ENCODE measurements at regions of chr1 and their contacts with region 1.

Region 1: GRCh38 chr1:247119600-247120407 is 15.6 kb upstream of the ZNF669 start:
- DNase-seq: no peak
- H3K4me3 ChIP-seq: no peak overlapping the region
- H3K27ac ChIP-seq: no peak overlapping the region
- H3K4me1 ChIP-seq: no peaks in the 10 kb centered on the region
- H3K27me3 ChIP-seq: no peaks in the 10 kb centered on the region
- CTCF ChIP-seq: no peak
- EP300 ChIP-seq: no peak
- POLR2A ChIP-seq: no peak

Region 2: GRCh38 chr1:247198781-247199180 is 79.0 kb after region 1 on chr1:
- intact Hi-C with region 1: loop called (anchors 10 kb)
- DNase-seq: no peak
- H3K4me3 ChIP-seq: no peak overlapping the region
- H3K27ac ChIP-seq: no peak overlapping the region
- H3K4me1 ChIP-seq: no peaks in the 10 kb centered on the region
- H3K27me3 ChIP-seq: no peaks in the 10 kb centered on the region
- CTCF ChIP-seq: no peak
- EP300 ChIP-seq: no peak
- POLR2A ChIP-seq: no peak

Region 3: DNA sequence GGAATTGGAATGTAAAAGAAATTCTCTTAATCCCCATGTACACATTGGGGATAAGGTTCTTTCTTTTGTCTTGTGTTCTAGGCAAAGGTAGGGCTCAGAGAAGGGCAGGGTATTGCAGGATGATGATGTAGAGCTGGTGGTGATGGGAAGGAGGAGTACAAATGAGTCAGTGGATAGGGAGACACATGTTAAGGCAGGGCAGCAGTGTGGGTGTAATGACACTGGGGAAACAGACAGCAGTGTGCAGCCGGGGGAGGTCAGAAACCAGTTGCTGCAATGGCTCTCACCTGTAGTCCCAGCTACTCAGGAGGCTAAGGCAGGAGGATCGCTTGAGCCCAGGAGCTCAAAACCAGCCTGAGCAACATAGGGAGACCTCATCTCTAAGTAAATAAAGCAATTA is 301.3 kb after region 1 on chr1:
- intact Hi-C with region 1: no loop called
- DNase-seq: no peak
- H3K4me3 ChIP-seq: no peak overlapping the region
- H3K27ac ChIP-seq: no peak overlapping the region
- H3K4me1 ChIP-seq: no peaks in the 10 kb centered on the region
- H3K27me3 ChIP-seq: peaks cover 0 to 10% (median 0%) of the 10 kb centered on the region in 4 donors
- CTCF ChIP-seq: no peak
- EP300 ChIP-seq: no peak
- POLR2A ChIP-seq: no peak